ENCODE measurements at regions of chr16 and their contacts with region 1.

Region 1: DNA sequence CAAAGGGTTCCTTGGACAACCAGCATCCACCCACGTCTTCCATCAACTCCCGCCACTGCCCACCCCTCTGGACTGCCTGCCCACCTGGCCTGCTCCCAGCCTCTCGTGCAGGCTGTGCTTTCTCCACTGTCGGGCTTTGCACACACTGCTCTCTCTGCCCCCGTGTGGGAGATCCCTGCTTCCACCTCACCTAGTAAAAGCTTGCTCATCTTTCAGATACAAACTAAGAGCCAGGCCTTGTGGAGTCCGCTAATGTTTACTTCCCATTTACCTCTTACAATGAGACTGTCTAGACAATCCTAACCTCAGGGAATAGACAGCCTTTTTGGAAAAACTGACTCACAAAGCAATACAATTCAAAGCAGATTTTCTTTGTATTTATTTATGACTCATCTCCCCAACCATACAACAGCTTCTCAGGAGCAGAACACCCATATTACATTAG is 67.6 kb downstream of the USP31 start:
- DNase-seq: peak; percentile 75
- H3K4me3 ChIP-seq: no peak overlapping the region
- H3K27ac ChIP-seq: peak overlapping the region; percentile 50
- H3K4me1 ChIP-seq: peaks cover 34% of the 10 kb centered on the region
- H3K27me3 ChIP-seq: no peaks in the 10 kb centered on the region
- CTCF ChIP-seq: no peak
- POLR2A ChIP-seq: no peak

Region 2: GRCh38 chr16:23149349-23149996 is 67.8 kb after region 1 on chr16 and contains the start of gene USP31:
- CTCF ChIA-PET with region 1: no interaction called
- POLR2A ChIA-PET with region 1: interaction called, 4 read pairs
- dilution Hi-C with region 1: no loop called
- intact Hi-C with region 1: loop called (anchors 5 kb)
- DNase-seq: peak; percentile 96
- H3K4me3 ChIP-seq: peak within 1 kb of the TSS; percentile 75 to 91 (median 84)
- H3K27ac ChIP-seq: peak within 1 kb of the TSS; percentile 51
- H3K4me1 ChIP-seq: peaks cover 21% of the 10 kb centered on the region
- H3K27me3 ChIP-seq: no peaks in the 10 kb centered on the region
- CTCF ChIP-seq: no peak
- POLR2A ChIP-seq: no peak
- total RNA-seq, gene USP31: 37.4 and 42.4 TPM in 2 replicates